ENCODE measurements at regions of chr19 and their contacts with region 1.

Region 1: DNA sequence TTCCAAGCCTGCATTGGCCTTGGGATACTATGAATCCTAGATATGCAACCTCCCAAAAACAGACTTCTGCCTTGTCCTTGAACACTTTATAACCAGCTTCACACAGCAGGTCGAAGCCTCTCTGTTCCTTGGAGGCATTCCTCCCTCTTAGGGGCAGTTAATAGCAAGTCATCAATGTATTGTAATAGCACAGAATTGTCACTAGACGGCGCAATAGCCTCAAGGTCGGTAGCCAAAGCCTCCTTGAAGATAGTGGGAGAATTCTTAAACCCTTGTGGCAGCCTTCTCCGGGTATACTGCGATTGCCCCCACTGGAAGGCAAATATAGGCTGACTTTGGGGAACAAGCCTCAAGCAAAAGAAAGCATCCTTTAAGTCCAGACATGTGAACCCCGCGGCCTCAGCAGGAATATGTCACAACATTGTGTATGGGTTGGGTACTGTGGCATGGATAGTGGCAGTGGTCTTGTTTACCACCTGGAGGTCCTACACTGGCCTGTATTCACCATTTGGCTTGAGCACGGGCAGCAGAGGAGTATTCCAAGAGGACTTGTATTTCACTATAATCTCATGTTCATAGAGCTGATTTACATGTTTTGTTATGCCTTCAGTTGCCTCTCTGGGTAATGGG is 61.1 kb downstream of the ZNF431 start:
- DNase-seq: peak in 2 of 6 donors; percentile 18 to 39
- ATAC-seq: peak in 3 of 4 donors; percentile 83 to 97 (median 86)
- H3K4me3 ChIP-seq: no peak overlapping the region
- H3K27ac ChIP-seq: no peak overlapping the region
- H3K4me1 ChIP-seq: no peaks in the 10 kb centered on the region
- H3K27me3 ChIP-seq: no peaks in the 10 kb centered on the region
- CTCF ChIP-seq: peak; percentile 52 to 80 (median 66)

Region 2: DNA sequence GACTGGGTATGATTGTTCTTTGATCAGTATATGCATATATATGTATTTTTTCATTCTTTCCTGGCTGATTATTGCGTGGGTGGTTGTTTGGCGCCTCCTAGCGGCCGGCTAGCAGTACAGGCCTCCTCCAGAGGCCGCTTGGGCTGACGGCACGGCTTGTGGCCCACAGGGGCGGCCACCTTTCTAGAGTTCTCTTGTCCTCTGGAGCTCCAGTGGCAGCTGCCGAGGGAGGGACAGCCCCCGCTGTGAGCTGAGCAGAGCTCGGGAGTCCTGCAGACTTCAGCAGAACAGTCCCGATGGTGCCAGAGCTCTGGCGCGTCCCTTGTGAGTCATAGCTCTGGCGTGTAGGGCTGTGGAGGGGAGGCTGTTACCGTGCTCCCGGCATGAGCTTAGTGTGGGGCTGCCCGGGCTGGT is 279.9 kb after region 1 on chr19:
- intact Hi-C with region 1: loop called in 2 of 3 experiments (anchors 5 to 10 kb)
- DNase-seq: peak; percentile 42 to 83 (median 74)
- ATAC-seq: peak; percentile 83 to 94 (median 90)
- H3K4me3 ChIP-seq: no peak overlapping the region
- H3K27ac ChIP-seq: peak overlapping the region in 1 of 4 donors; percentile 23
- H3K4me1 ChIP-seq: no peaks in the 10 kb centered on the region
- H3K27me3 ChIP-seq: no peaks in the 10 kb centered on the region
- CTCF ChIP-seq: peak; percentile 90 to 95 (median 91)

Region 3: DNA sequence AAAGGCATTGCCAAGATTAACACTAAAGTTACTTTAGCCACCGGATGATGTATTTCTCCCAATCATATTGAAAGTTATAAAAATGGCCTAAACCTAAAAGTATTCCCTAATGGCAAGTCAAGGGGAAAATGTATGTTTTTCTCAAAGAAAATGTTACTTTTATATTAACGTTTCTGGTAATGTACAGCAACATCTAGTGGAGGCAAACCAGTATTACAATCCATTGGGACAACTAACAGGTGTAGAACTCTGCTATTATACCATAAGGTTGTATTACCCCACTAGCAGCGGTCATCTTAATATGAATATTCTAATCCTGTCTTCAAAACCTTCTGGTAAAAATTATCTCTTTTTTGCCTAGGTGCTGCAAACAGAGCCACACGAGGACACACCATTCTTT is 495.2 kb after region 1 on chr19:
- intact Hi-C with region 1: loop called in 1 of 3 experiments (anchors 10 kb)
- DNase-seq: no peak
- ATAC-seq: peak; percentile 82 to 93 (median 91)
- H3K4me3 ChIP-seq: no peak overlapping the region
- H3K27ac ChIP-seq: no peak overlapping the region
- H3K4me1 ChIP-seq: no peaks in the 10 kb centered on the region
- H3K27me3 ChIP-seq: no peaks in the 10 kb centered on the region
- CTCF ChIP-seq: peak; percentile 55 to 76 (median 66)